ENCODE measurements at regions of chr3 and their contacts with region 1.

Region 1: GRCh38 chr3:177197041-177197727 is at the start of gene TBL1XR1:
- DNase-seq: peak; percentile 86
- H3K4me3 Mint-ChIP-seq: peak within 1 kb of the TSS; percentile 97
- H3K27ac Mint-ChIP-seq: peak within 1 kb of the TSS; percentile 100
- H3K4me1 Mint-ChIP-seq: peaks cover 51% of the 10 kb centered on the region
- H3K27me3 Mint-ChIP-seq: no peaks in the 10 kb centered on the region
- total RNA-seq, gene TBL1XR1: 168 and 169 TPM in 2 replicates

Region 2: GRCh38 chr3:177057768-177058167 is 139.4 kb before region 1 on chr3:
- intact Hi-C with region 1: loop called (anchors 2 kb)
- DNase-seq: peak; percentile 22
- H3K4me3 Mint-ChIP-seq: no peak overlapping the region
- H3K27ac Mint-ChIP-seq: no peak overlapping the region
- H3K4me1 Mint-ChIP-seq: peaks cover 22% of the 10 kb centered on the region
- H3K27me3 Mint-ChIP-seq: no peaks in the 10 kb centered on the region

Region 3: GRCh38 chr3:177185035-177185574 is 12.1 kb before region 1 on chr3:
- intact Hi-C with region 1: loop called (anchors 2 kb)
- DNase-seq: no peak
- H3K4me3 Mint-ChIP-seq: no peak overlapping the region
- H3K27ac Mint-ChIP-seq: peak overlapping the region; percentile 54
- H3K4me1 Mint-ChIP-seq: peaks cover 31% of the 10 kb centered on the region
- H3K27me3 Mint-ChIP-seq: no peaks in the 10 kb centered on the region

Region 4: GRCh38 chr3:177314897-177315296 is 117.7 kb after region 1 on chr3:
- intact Hi-C with region 1: loop called (anchors 1 kb)
- DNase-seq: no peak
- H3K4me3 Mint-ChIP-seq: no peak overlapping the region
- H3K27ac Mint-ChIP-seq: peak overlapping the region; percentile 49
- H3K4me1 Mint-ChIP-seq: peaks cover 12% of the 10 kb centered on the region
- H3K27me3 Mint-ChIP-seq: peaks cover 2% of the 10 kb centered on the region

Region 5: DNA sequence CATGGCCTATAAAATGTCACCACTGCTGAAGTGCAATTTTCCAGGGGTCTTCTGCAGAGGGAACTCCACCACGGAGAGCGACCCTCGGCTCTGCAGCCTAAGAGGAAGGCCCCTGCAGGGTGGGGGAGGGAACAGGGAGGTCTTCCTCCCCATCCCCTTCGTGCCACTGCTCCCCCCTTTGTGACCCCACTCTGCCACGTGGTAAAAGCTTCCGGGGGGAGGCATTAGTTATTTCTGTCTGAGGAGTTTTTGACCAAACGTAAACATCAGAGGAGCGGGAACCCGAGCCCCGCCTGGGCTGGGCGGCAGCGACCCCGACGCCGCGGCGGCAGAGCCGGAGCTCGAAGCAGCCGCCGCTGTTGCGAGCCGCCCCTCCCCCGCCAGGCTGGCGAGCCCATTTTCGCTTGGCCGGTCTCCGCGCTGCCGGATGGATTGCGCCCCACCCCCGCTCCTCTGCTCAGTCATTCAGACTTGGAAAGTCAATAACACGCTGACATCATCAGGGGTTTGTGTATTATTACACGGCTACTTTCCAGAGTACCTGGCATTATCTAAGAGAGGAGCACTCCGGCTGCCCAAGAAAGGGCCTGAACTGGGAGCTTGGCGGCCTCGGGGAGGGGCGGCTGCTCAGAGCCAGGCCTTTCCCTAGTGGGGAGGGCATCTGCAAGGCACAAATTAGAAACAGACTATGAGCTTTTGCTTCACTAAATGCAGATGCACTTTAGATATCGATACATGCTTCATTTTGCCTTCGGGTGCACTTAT is 162.6 kb after region 1 on chr3:
- intact Hi-C with region 1: loop called (anchors 1 kb)
- DNase-seq: peak; percentile 93
- H3K4me3 Mint-ChIP-seq: peak overlapping the region; percentile 71
- H3K27ac Mint-ChIP-seq: peak overlapping the region; percentile 91
- H3K4me1 Mint-ChIP-seq: peaks cover 51% of the 10 kb centered on the region
- H3K27me3 Mint-ChIP-seq: peaks cover 2% of the 10 kb centered on the region

Region 6: DNA sequence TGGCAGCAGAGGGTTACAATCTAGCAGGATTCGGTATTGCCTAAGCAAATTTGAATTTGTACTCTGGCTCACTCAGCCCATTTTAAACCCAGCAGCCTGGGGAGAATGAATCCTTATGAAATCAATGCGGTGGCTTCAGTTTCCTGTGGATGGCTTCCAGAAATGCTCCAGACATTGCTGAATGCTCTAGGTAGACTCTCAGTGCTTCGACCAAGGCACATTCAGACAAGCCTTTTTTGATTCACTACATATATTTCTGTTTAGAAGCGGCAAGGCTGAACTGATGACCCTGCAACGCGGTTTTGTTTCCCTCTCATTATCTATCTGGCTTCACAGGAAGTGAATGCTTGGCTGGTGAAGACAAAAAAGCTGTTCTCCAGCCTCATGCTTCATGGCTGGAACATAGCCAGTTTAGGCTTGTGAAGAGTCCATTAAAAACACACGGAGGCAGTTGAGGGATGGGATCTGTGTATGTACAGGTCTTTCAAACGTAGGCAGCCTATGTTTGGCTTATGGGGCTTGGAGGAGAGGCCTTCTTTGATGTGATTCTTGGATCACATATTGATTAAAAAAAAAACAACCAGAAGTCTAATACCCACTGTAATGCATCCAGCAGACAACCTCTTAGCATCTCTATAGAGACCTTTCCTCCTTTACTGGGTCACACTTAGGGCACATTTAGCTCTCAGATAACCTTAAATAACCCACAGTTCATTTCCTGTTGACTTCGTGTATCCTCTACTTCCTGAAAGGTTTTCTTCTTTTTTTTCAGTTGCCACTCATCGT is 400.3 kb after region 1 on chr3:
- intact Hi-C with region 1: loop called (anchors 5 kb)
- DNase-seq: no peak
- H3K4me3 Mint-ChIP-seq: peak overlapping the region; percentile 53
- H3K27ac Mint-ChIP-seq: peak overlapping the region; percentile 90
- H3K4me1 Mint-ChIP-seq: peaks cover 53% of the 10 kb centered on the region
- H3K27me3 Mint-ChIP-seq: no peaks in the 10 kb centered on the region

Region 7: GRCh38 chr3:177787279-177788041 is 590.3 kb after region 1 on chr3:
- intact Hi-C with region 1: loop called (anchors 2 kb)
- DNase-seq: no peak
- H3K4me3 Mint-ChIP-seq: no peak overlapping the region
- H3K27ac Mint-ChIP-seq: peak overlapping the region; percentile 53
- H3K4me1 Mint-ChIP-seq: peaks cover 15% of the 10 kb centered on the region
- H3K27me3 Mint-ChIP-seq: no peaks in the 10 kb centered on the region

Measured in activated T-helper 2 cell treated with anti-CD3 and anti-CD28 coated beads, Interferon-gamma antibody, Interleukin-2, Interleukin-4, amounts not matched to agents 10 μg/mL and 5 μg/mL and 100 μg/mL, durations not matched to agents 14 hours and 24 hours and 36 hours (primary cell).